GM12878 (cell line): ENCODE measurements at regions of chr15 and their contacts with region 1.

Region 1: DNA sequence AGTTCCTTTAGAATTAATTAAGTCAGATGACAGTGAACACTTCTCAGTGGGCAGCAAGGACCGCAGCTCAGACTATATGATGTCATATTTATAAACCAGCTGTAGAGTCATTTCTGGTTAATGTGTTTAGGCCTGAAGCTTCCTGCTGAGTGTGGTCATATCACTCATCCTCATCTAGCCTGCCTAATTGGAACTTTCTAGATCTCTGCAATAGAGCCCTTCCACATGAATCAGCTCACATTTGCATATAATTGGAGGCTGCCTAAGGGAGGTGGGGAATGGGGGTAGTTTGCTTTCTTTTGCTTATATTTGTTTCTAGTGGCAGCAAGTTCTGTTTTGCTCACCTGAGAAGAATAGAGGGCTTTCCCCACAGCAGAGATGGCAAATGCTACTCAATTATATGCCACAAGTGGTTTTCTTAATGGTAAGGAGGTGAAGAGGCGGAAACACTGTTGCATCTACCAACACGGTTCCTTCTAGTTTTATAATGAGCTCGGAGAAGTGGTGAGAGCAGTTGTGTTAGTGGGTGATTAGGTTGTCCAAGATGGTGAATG is 148.1 kb downstream of the KLHL25 start:
- DNase-seq: no peak
- ATAC-seq: peak; percentile 93
- H3K4me3 ChIP-seq: no peak overlapping the region
- H3K27ac ChIP-seq: peak overlapping the region; percentile 21
- H3K4me1 ChIP-seq: peaks cover 8% of the 10 kb centered on the region
- H3K27me3 ChIP-seq: no peaks in the 10 kb centered on the region
- CTCF ChIP-seq: no peak
- EP300 ChIP-seq: peak; percentile 25 to 39; a peak in 1 of 4 replicates
- POLR2A ChIP-seq: no peak
- RAD21 ChIP-seq: no peak

Region 2: GRCh38 chr15:85625856-85626255 is 20.8 kb before region 1 on chr15:
- CTCF ChIA-PET with region 1: interaction called, 5 read pairs
- POLR2A ChIA-PET with region 1: no interaction called
- RAD21 ChIA-PET with region 1: interaction called, 3 read pairs
- SMC1A ChIA-PET with region 1: interaction called, 17 read pairs
- in situ Hi-C with region 1: no loop called
- intact Hi-C with region 1: no loop called
- DNase-seq: no peak
- ATAC-seq: peak; percentile 92
- H3K4me3 ChIP-seq: no peak overlapping the region
- H3K27ac ChIP-seq: peak overlapping the region; percentile 50; the same call in 1 of the 2 replicates
- H3K4me1 ChIP-seq: peaks cover 27% of the 10 kb centered on the region
- H3K27me3 ChIP-seq: no peaks in the 10 kb centered on the region
- CTCF ChIP-seq: no peak
- EP300 ChIP-seq: no peak
- POLR2A ChIP-seq: no peak
- RAD21 ChIP-seq: no peak

Region 3: DNA sequence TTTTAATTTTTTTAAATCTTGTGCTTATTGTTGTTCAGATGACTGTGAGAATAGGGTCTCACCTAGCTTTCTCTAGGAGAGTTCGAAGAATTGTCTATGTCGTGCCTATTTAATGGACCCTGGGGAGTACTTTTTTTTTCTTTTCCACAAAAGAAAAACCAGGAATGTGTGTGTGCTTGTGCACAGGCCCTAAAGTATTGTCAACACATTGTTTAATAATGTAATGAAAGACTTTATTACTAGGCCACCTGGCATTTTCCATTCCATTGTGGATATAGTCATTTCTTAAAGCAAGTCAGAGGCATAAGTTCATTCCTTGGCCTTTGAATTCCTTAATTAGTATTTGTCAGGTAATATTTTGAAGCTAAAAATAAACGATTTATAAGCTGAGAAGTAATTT is 12.2 kb after region 1 on chr15:
- CTCF ChIA-PET with region 1: interaction called, 4 read pairs
- POLR2A ChIA-PET with region 1: interaction called, 4 read pairs
- RAD21 ChIA-PET with region 1: no interaction called
- SMC1A ChIA-PET with region 1: interaction called, 10 read pairs
- in situ Hi-C with region 1: no loop called
- intact Hi-C with region 1: no loop called
- DNase-seq: no peak
- ATAC-seq: no peak
- H3K4me3 ChIP-seq: no peak overlapping the region
- H3K27ac ChIP-seq: no peak overlapping the region
- H3K4me1 ChIP-seq: no peaks in the 10 kb centered on the region
- H3K27me3 ChIP-seq: no peaks in the 10 kb centered on the region
- CTCF ChIP-seq: no peak
- EP300 ChIP-seq: no peak
- POLR2A ChIP-seq: no peak
- RAD21 ChIP-seq: no peak